ENCODE measurements at regions of chr15 and their contacts with region 1.

Region 1: DNA sequence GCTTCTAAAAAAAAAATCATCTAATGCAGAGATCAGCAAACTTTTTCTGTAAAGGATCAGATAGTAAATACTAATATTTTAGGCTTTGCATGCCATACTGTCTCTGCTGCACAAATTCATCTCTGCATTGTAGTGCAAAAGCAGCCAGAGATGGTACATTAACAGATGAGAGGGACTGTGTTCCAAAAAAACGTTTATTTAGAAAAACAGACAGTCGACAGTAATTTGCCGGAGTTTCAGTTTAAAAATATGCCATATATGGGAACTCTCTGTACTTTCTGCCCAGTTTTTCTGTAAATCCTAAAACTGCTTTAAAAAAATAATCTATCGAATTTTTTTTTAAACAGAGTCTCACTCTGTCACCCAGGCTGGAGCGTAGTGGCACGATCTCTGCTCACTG is 14.3 kb downstream of the MINDY2 start:
- DNase-seq: no peak
- ATAC-seq: no peak
- H3K4me3 ChIP-seq: no peak overlapping the region
- H3K4me3 Mint-ChIP-seq: no peak overlapping the region
- H3K27ac ChIP-seq: no peak overlapping the region
- H3K27ac Mint-ChIP-seq: no peak overlapping the region
- H3K4me1 ChIP-seq: no peaks in the 10 kb centered on the region
- H3K4me1 Mint-ChIP-seq: peaks cover 0 to 7% (median 7%) of the 10 kb centered on the region in 3 donors
- H3K27me3 ChIP-seq: no peaks in the 10 kb centered on the region
- H3K27me3 Mint-ChIP-seq: no peaks in the 10 kb centered on the region

Region 2: GRCh38 chr15:58738046-58738707 is 47.2 kb before region 1 on chr15:
- CTCF ChIA-PET with region 1: interaction called in 1 of 2 experiments, 12 read pairs
- POLR2A ChIA-PET with region 1: no interaction called
- DNase-seq: no peak
- ATAC-seq: no peak
- H3K4me3 ChIP-seq: no peak overlapping the region
- H3K4me3 Mint-ChIP-seq: no peak overlapping the region
- H3K27ac ChIP-seq: no peak overlapping the region
- H3K27ac Mint-ChIP-seq: peak overlapping the region in 1 of 2 donors; percentile 40
- H3K4me1 ChIP-seq: peaks cover 14 to 40% of the 10 kb centered on the region in 2 experiments
- H3K4me1 Mint-ChIP-seq: peaks cover 77 to 81% (median 77%) of the 10 kb centered on the region in 3 donors
- H3K27me3 ChIP-seq: no peaks in the 10 kb centered on the region
- H3K27me3 Mint-ChIP-seq: no peaks in the 10 kb centered on the region

Measured in T-cell (primary cell).